Activated CD4-positive, alpha-beta memory T cell treated with anti-CD3 and anti-CD28 coated beads for 36 hours (primary cell): ENCODE measurements at regions of chr1 and their contacts with region 1.

Region 1: DNA sequence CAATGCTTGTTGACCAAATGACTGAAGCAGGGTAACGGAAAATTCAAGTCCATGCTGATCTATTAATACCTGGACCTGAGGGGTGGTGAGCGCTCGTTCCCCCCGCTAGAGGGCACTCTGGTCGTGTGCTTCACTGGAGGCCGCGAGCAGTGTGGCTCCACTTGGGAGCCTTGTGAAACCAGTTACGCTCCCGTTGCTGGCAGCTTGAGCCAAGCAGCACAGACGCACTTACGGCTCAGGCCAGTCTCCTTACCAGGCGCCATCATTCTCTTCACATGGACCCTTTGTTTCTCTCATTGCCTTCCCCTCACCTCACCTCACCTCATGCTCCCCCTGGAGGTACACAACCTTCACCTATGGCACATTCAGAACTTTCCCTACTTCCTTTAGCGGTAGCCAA is 49.7 kb upstream of the TSPAN2 start:
- DNase-seq: peak; percentile 73
- H3K4me3 Mint-ChIP-seq: no peak overlapping the region
- H3K27ac Mint-ChIP-seq: no peak overlapping the region
- H3K4me1 Mint-ChIP-seq: peaks cover 4% of the 10 kb centered on the region
- H3K27me3 Mint-ChIP-seq: peaks cover 19% of the 10 kb centered on the region

Region 2: DNA sequence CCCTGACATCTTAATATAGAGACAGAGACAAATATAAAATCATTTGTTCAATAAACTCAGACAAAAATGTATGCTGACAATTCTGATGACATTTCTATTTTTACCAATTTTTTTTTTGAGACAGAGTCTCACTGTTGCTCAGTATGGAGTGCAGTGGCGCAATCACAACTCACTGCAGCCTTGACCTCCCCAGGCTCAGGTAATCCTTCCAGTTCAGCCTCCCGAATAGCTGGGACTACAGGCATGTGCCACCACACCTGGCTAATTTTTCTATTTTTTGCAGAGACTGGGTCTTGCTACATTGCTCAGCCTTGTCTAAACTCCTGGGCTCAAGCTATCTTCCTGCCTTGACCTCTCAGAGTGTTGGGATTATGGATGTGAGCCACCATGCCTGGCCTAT is 344.9 kb before region 1 on chr1:
- CTCF ChIA-PET with region 1: no interaction called
- POLR2A ChIA-PET with region 1: no interaction called
- intact Hi-C with region 1: no loop called
- DNase-seq: no peak
- H3K4me3 Mint-ChIP-seq: no peak overlapping the region
- H3K27ac Mint-ChIP-seq: no peak overlapping the region
- H3K4me1 Mint-ChIP-seq: no peaks in the 10 kb centered on the region
- H3K27me3 Mint-ChIP-seq: peaks cover 12% of the 10 kb centered on the region

Region 3: GRCh38 chr1:115184951-115185331 is 46.0 kb after region 1 on chr1:
- CTCF ChIA-PET with region 1: interaction called, 4 read pairs
- POLR2A ChIA-PET with region 1: no interaction called
- intact Hi-C with region 1: loop called (anchors 2 kb)
- DNase-seq: no peak
- H3K4me3 Mint-ChIP-seq: no peak overlapping the region
- H3K27ac Mint-ChIP-seq: peak overlapping the region; percentile 61
- H3K4me1 Mint-ChIP-seq: peaks cover 10% of the 10 kb centered on the region
- H3K27me3 Mint-ChIP-seq: no peaks in the 10 kb centered on the region

Region 4: GRCh38 chr1:115251856-115252255 is 112.9 kb after region 1 on chr1:
- CTCF ChIA-PET with region 1: no interaction called
- POLR2A ChIA-PET with region 1: no interaction called
- intact Hi-C with region 1: no loop called
- DNase-seq: no peak
- H3K4me3 Mint-ChIP-seq: no peak overlapping the region
- H3K27ac Mint-ChIP-seq: no peak overlapping the region
- H3K4me1 Mint-ChIP-seq: no peaks in the 10 kb centered on the region
- H3K27me3 Mint-ChIP-seq: no peaks in the 10 kb centered on the region

Region 5: DNA sequence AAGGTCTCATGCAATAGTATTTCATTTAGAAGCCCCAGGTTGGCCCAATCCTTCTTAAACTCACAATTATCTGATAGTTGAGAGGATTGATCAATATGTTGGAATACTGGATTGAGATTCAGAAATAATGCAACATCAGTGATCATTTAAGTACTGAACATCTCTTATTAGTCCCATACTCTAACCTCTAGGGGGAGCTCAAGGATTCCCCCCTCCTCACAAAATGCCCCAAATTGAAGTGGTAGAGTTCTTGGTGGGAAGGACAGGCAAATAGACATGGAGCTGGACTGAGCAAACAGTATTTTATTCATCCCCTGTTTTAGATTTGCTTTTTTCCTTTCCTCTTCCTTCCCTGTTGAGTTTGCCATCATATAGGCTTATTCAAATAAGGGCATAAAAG is 136.2 kb after region 1 on chr1:
- CTCF ChIA-PET with region 1: interaction called, 9 read pairs
- POLR2A ChIA-PET with region 1: no interaction called
- intact Hi-C with region 1: loop called (anchors 10 kb)
- DNase-seq: no peak
- H3K4me3 Mint-ChIP-seq: no peak overlapping the region
- H3K27ac Mint-ChIP-seq: no peak overlapping the region
- H3K4me1 Mint-ChIP-seq: peaks cover 2% of the 10 kb centered on the region
- H3K27me3 Mint-ChIP-seq: peaks cover 6% of the 10 kb centered on the region

Region 6: GRCh38 chr1:115469703-115470476 is 330.9 kb after region 1 on chr1:
- CTCF ChIA-PET with region 1: interaction called, 24 read pairs
- POLR2A ChIA-PET with region 1: no interaction called
- intact Hi-C with region 1: loop called (anchors 1 kb)
- DNase-seq: peak; percentile 46
- H3K4me3 Mint-ChIP-seq: no peak overlapping the region
- H3K27ac Mint-ChIP-seq: no peak overlapping the region
- H3K4me1 Mint-ChIP-seq: peaks cover 4% of the 10 kb centered on the region
- H3K27me3 Mint-ChIP-seq: peaks cover 6% of the 10 kb centered on the region

Region 7: GRCh38 chr1:115595279-115596079 is 456.5 kb after region 1 on chr1:
- CTCF ChIA-PET with region 1: interaction called, 136 read pairs
- POLR2A ChIA-PET with region 1: no interaction called
- intact Hi-C with region 1: loop called (anchors 1 kb)
- DNase-seq: peak; percentile 78
- H3K4me3 Mint-ChIP-seq: no peak overlapping the region
- H3K27ac Mint-ChIP-seq: no peak overlapping the region
- H3K4me1 Mint-ChIP-seq: no peaks in the 10 kb centered on the region
- H3K27me3 Mint-ChIP-seq: peaks cover 2% of the 10 kb centered on the region